Dorsolateral prefrontal cortex (tissue), 120 donors: ENCODE measurements at regions of chr15 and their contacts with region 1.

Region 1: GRCh38 chr15:94324117-94324826 is 92.9 kb downstream of the MCTP2 start:
- DNase-seq: peak in 4 of 10 donors; percentile 18 to 52 (median 26)
- H3K4me3 ChIP-seq: peak overlapping the region in 2 of 59 donors; percentile 3 to 9
- H3K27ac ChIP-seq: no peak overlapping the region
- H3K27me3 ChIP-seq: peaks cover 0 to 5% (median 0%) of the 10 kb centered on the region in 45 donors
- CTCF ChIP-seq: peak; percentile 62 to 93 (median 85)

Region 2: DNA sequence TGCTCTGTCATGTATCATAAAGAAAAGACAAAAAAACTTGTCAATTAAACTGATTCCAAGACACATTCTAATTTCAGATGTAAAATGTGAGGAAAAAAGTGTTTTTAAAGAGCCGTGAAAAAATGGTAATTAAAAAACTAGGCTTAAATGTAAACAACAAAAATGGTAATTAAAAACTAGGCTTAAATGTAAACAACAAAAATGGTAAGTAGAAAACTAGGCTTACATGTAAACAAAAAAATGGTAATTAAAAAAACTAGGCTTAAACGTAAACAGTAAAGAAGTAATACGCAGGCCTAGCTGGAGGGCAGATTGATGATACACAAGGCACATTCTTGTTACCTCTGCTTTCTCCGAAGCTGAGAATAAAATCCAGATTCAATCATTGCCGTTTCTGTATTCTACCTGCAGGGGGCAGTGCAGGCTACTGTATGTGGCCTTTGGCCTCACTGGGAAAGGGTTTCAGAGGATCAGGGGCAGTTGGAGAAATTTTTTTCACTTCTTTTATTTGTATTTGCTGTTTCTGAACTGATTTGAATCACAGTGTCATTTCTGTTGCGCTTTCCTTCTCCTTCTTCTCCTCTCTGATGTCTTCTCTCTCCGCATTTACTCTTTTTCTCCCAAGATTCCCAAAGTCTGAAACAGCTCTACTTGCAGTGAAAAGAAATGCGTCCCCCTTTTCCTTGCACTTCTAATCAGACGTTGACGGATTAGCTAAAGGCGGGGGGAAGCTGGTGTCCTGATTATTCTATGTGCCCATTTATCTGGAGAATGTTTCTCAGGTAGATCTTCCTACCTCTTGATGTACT is 160.1 kb before region 1 on chr15:
- intact Hi-C with region 1: loop called (anchors 2 to 10 kb)
- DNase-seq: peak in 4 of 10 donors; percentile 5 to 39 (median 34)
- H3K4me3 ChIP-seq: no peak overlapping the region
- H3K27ac ChIP-seq: no peak overlapping the region
- H3K27me3 ChIP-seq: peaks cover 0 to 8% (median 0%) of the 10 kb centered on the region in 45 donors
- CTCF ChIP-seq: peak; percentile 56 to 89 (median 74)